ENCODE measurements at regions of chr5 and their contacts with region 1.

Region 1: DNA sequence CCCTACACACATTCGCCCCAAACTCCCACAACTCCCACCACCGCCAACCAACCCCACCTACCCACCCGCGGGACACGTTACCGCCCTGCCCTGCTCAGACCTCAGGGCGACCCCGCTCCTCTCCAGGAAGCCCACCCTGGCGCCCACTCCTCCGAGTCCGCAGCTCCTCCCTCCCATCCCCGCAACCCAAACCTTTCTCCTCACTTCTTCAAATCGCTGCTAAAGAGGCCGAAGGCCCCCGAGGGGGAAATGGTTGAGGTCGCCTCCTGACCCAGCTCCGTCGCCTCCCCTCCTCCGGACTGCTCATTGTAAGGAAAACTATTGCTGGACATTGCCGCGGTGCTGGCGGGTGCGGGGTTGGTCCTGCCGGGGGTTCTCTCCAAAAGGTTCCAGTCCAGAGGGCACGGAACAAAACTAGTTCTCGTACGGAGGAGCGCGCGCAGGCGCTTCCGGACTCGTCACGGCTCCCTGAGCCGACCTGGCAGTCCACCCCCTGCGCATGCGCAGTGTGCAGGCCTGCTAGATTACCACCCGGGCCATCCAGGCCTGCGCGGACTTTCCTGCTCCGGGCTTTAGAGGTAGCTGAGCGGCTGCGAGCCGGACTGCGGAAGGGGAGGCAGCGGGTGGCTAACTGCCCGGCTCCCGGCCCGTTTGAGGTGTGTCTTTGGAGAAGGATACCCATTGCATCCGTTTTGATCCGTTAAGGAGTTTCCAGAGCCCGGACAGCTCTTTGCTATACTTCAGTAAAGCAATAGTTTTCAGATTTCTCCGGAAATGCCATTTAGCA is at the start of gene AP3B1:
- DNase-seq: peak; percentile 98
- H3K4me3 Mint-ChIP-seq: peak within 1 kb of the TSS; percentile 90
- H3K27ac Mint-ChIP-seq: peak within 1 kb of the TSS; percentile 96
- H3K4me1 Mint-ChIP-seq: peaks cover 50% of the 10 kb centered on the region
- H3K27me3 Mint-ChIP-seq: peaks cover 20% of the 10 kb centered on the region
- total RNA-seq, gene AP3B1: 40.8 and 40.9 TPM in 2 replicates

Region 2: DNA sequence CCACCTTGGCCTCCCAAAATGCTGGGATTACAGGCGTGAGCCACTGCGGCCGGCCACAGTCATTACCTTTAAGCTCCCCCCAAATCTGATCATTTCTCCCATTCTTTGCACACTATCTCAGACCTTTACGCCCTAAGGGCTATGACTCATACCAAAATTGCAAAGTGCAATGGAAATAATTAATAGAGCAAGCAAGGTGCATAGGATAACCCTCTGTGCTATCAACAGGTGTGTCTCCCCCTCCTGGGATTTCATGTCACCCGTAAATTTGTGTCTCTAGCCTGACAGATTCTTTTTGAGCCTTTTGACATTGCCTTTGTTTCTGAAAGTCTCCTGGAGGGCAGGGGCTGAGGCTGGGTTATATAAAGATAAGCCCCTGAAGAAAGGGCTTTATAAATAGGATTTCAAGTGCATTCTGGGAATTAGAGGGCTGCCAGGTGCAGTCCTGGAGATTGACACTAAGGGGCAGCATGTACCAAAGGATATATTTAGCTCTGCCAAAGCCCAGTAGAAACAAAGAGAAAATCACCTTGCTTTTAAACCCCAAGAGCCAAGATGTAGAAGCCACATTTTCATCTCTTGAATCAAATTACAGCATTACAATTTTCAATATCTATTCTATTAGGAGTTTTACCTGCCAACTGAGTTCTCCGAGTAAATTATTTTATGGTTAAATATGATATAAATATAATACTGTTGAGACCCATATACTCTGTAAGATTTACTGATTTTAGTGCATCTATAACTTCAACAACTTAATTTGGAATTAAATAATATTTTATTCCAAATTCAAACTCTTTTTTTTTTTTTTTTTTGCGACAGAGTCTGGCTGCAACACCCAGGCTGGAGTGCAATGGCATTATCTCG is 1426.4 kb before region 1 on chr5:
- intact Hi-C with region 1: loop called (anchors 10 kb)
- DNase-seq: peak; percentile 50
- H3K4me3 Mint-ChIP-seq: no peak overlapping the region
- H3K27ac Mint-ChIP-seq: no peak overlapping the region
- H3K4me1 Mint-ChIP-seq: peaks cover 5% of the 10 kb centered on the region
- H3K27me3 Mint-ChIP-seq: peaks cover 2% of the 10 kb centered on the region

Region 3: DNA sequence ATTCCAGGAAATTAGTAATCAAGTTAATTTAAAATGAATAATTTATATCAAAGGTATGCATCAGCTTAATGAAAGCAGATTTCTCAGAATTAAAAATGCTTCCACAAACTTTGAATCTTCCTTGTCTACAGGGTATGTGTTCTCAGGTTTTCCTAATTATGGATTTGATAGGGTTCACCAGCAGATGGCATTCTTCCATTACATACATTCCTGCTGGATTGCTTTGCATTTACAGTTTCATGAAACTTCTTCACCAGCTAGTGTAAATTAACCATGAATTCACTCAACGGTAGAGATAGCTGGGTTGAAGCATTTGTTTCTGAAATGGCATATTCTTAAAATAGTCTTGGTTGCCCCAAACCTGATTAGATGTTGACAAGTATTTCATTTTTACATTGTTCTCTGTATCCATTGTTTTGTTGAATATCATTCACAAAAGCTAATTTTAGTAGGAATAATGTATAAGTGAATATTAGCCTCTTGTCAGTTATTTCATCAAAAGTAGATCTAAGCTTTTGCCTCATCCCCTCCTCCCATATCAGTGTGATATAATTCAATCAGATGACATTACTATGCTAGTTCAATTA is 733.7 kb before region 1 on chr5:
- intact Hi-C with region 1: loop called (anchors 5 kb)
- DNase-seq: no peak
- H3K4me3 Mint-ChIP-seq: no peak overlapping the region
- H3K27ac Mint-ChIP-seq: no peak overlapping the region
- H3K4me1 Mint-ChIP-seq: no peaks in the 10 kb centered on the region
- H3K27me3 Mint-ChIP-seq: peaks cover 11% of the 10 kb centered on the region

Region 4: DNA sequence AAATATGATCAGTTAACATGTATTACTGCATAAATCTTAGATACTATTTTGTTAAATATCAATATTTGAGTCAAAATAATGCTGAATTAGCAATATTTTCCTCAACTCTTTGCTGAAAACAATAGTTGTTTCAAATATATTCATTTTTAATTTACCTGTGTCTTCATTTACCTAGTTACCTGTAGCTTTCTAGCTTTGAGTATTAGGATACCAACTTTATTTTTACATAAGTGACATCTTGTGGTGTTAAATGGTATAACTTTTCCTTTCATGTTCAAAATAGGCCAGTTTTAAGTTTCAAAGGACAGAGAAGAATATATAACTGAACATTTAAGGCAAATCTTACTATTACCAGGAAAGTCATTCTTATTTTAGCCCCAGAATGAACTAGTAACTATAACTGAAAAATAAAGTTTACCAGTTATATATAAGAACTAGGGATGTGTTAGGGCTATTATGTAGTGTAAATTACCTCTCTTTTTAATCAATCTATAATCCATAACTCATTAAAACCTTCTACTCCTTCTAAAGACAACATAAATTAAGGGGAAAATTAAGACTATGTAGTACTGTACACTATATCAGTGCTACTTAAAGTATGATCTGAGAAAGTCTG is 25.2 kb before region 1 on chr5:
- intact Hi-C with region 1: loop called (anchors 2 kb)
- DNase-seq: no peak
- H3K4me3 Mint-ChIP-seq: no peak overlapping the region
- H3K27ac Mint-ChIP-seq: no peak overlapping the region
- H3K4me1 Mint-ChIP-seq: no peaks in the 10 kb centered on the region
- H3K27me3 Mint-ChIP-seq: no peaks in the 10 kb centered on the region

Region 5: GRCh38 chr5:78359831-78360673 is 65.6 kb after region 1 on chr5 and contains the start of gene SCAMP1:
- intact Hi-C with region 1: loop called (anchors 1 kb)
- DNase-seq: peak; percentile 93
- H3K4me3 Mint-ChIP-seq: peak within 1 kb of the TSS; percentile 98
- H3K27ac Mint-ChIP-seq: peak within 1 kb of the TSS; percentile 92
- H3K4me1 Mint-ChIP-seq: peaks cover 32% of the 10 kb centered on the region
- H3K27me3 Mint-ChIP-seq: no peaks in the 10 kb centered on the region
- total RNA-seq, gene SCAMP1: 21.3 and 21.7 TPM in 2 replicates

Region 6: DNA sequence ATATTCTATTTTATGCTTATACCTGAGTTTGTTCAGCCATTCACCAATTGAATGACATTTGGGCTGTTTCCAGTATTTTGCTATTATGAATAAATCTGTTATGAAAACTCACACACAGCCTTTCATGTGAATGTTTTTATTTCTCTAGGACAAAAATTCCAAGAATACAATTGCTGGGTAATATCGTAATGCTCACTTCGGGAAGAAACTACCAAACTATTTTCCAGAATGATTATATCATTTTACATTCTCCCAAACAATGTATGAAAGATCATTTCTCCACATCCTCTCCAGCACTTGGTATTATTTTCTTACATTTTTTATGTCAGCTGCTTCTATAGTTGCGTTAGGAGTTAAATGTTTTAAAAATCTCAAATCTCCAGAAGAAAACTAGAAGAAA is 412.4 kb after region 1 on chr5:
- intact Hi-C with region 1: no loop called
- DNase-seq: no peak
- H3K4me3 Mint-ChIP-seq: no peak overlapping the region
- H3K27ac Mint-ChIP-seq: no peak overlapping the region
- H3K4me1 Mint-ChIP-seq: no peaks in the 10 kb centered on the region
- H3K27me3 Mint-ChIP-seq: peaks cover 5% of the 10 kb centered on the region

Region 7: DNA sequence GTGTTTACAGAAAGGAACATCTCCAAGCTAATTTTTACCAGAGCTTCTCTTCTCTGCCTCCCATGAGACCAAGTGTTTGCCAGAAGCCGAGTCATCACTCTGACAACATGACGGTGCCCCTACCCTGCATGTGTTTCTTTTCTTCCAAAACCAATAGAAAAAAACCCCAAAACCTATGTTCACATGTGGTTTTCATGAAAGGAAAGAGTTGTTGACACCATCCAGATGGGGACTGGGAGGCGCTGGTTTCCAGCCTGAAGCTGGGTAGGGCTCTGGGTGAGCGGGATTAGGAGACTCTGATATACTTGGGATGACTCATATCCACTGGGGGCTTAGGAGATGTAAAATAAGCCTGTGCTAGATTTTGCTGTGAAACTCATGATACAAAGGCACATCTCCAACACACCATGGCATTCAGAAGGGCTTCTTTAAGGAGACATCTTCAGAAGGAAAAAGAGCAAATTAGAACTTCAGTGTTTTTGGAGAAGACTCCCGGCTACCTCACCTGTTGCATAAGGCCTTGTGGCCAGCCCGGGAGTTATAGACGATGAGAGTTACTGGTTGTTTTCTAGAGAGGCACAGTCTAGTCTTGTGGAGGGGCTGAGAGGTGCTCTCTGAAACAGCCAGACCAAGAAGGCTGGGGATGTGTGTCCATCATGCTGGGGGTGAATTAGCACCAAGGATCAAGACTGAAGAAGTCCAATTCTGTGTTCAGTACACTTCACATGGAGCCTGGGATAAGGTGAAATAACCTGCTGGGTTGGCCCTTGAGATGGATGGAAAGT is 463.0 kb after region 1 on chr5:
- intact Hi-C with region 1: loop called (anchors 1 kb)
- DNase-seq: peak; percentile 9
- H3K4me3 Mint-ChIP-seq: peak overlapping the region; percentile 55
- H3K27ac Mint-ChIP-seq: peak overlapping the region; percentile 76
- H3K4me1 Mint-ChIP-seq: peaks cover 31% of the 10 kb centered on the region
- H3K27me3 Mint-ChIP-seq: no peaks in the 10 kb centered on the region

Region 8: GRCh38 chr5:79235634-79236363 is 941.4 kb after region 1 on chr5 and contains the start of gene JMY:
- intact Hi-C with region 1: loop called (anchors 5 kb)
- DNase-seq: peak; percentile 77
- H3K4me3 Mint-ChIP-seq: peak within 1 kb of the TSS; percentile 94
- H3K27ac Mint-ChIP-seq: peak within 1 kb of the TSS; percentile 95
- H3K4me1 Mint-ChIP-seq: peaks cover 33% of the 10 kb centered on the region
- H3K27me3 Mint-ChIP-seq: peaks cover 2% of the 10 kb centered on the region
- total RNA-seq, gene JMY: 5.5 and 5.9 TPM in 2 replicates

Measured in activated T-helper 1 cell treated with anti-CD3 and anti-CD28 coated beads, Interleukin-12 subunit alpha, Interleukin-12 subunit beta, Interleukin-2, Interleukin-4 antibody, amounts not matched to agents 30 ng/mL and 10 ng/mL and 1 ng/mL, durations not matched to agents 14 hours and 24 hours and 36 hours (primary cell).